SK-N-SH (cell line): ENCODE measurements at regions of chr20 and their contacts with region 1.

Region 1: DNA sequence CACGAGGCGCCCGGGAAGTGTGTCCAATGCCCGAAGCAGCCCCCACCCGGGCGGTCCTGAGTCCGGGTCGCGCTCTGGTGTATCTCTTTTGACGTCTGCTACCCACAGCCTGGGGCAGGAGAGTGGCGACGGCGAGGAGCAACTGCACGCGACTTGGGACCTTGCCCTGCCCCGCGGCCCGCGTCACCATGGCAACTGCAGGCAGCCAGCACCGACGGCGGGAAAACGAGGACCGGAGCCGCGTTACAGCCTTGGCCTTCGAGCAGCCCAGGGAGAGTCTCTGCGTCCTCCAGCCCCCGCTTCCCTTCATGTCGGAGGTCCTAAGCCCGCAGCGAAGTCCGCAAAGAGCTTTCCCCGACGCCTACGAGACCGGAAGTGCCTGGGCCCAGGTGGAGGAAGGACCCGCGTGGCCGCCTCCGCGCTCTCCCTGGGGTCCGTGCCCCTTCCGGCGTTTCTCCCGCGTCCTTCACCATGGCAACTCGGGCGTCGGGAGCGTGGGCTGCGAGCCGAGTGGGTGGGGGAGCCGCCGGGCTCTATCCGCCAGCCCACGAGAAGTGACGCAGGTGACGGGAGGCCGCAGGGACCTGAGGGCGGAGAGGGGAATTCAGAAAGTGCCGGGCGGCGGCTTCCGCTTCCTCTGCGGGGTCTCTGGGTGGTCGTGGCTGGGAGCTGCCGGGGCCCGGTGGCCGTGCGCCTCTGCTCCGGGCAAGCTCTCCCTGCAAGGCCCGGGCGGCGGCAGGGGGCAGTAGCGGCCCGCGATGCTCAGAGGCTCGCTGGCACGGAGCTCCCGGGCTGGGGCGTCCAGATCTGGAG is 88.6 kb upstream of the TGM3 start:
- DNase-seq: peak; percentile 93
- H3K4me3 ChIP-seq: peak overlapping the region; percentile 48 to 66
- H3K27ac ChIP-seq: no peak overlapping the region
- H3K4me1 ChIP-seq: peaks cover 0 to 5% of the 10 kb centered on the region in 2 experiments; a peak in 1 of 4 replicates
- H3K27me3 ChIP-seq: peaks cover 6% of the 10 kb centered on the region; the same call in 1 of the 2 replicates
- CTCF ChIP-seq: peak; percentile 65
- EP300 ChIP-seq: no peak
- RAD21 ChIP-seq: peak; percentile 70

Region 2: GRCh38 chr20:2195614-2196013 is 11.5 kb before region 1 on chr20:
- CTCF ChIA-PET with region 1: interaction called, 14 read pairs
- POLR2A ChIA-PET with region 1: no interaction called
- DNase-seq: no peak
- H3K4me3 ChIP-seq: no peak overlapping the region
- H3K27ac ChIP-seq: no peak overlapping the region
- H3K4me1 ChIP-seq: no peaks in the 10 kb centered on the region; a peak in 1 of 4 replicates
- H3K27me3 ChIP-seq: no peaks in the 10 kb centered on the region; the same call in 1 of the 2 replicates
- CTCF ChIP-seq: no peak
- EP300 ChIP-seq: no peak
- RAD21 ChIP-seq: no peak

Region 3: GRCh38 chr20:2217857-2218539 is 10.8 kb after region 1 on chr20:
- CTCF ChIA-PET with region 1: interaction called, 16 read pairs
- POLR2A ChIA-PET with region 1: no interaction called
- DNase-seq: no peak
- H3K4me3 ChIP-seq: no peak overlapping the region
- H3K27ac ChIP-seq: no peak overlapping the region
- H3K4me1 ChIP-seq: no peaks in the 10 kb centered on the region
- H3K27me3 ChIP-seq: no peaks in the 10 kb centered on the region
- CTCF ChIP-seq: no peak
- EP300 ChIP-seq: no peak
- RAD21 ChIP-seq: no peak

Region 4: DNA sequence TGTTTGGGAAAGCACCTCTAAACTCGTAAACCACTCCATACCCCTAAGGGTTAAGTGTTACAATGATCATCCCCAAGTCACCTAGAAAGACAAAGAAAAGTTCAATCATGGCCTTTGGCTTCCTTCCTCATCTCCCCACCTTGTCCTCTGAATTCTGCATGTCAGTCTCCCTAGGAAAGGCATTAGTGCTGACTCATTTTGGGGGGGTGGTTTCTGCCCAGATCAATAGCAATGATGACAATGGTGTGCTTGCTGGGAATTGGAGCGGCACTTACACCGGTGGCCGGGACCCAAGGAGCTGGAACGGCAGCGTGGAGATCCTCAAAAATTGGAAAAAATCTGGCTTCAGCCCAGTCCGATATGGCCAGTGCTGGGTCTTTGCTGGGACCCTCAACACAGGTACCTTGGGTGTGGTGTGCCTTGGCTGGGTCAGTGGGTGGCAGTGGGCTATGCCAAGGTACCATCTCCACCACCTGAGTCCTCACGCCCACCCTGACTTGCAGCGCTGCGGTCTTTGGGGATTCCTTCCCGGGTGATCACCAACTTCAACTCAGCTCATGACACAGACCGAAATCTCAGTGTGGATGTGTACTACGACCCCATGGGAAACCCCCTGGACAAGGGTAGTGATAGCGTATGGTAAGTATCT is 109.8 kb after region 1 on chr20:
- CTCF ChIA-PET with region 1: no interaction called
- POLR2A ChIA-PET with region 1: no interaction called
- DNase-seq: no peak
- H3K4me3 ChIP-seq: no peak overlapping the region
- H3K27ac ChIP-seq: no peak overlapping the region
- H3K4me1 ChIP-seq: peaks cover 0 to 6% of the 10 kb centered on the region in 2 experiments; a peak in 1 of 4 replicates
- H3K27me3 ChIP-seq: no peaks in the 10 kb centered on the region; the same call in 1 of the 2 replicates
- CTCF ChIP-seq: no peak
- EP300 ChIP-seq: no peak
- RAD21 ChIP-seq: no peak

Region 5: DNA sequence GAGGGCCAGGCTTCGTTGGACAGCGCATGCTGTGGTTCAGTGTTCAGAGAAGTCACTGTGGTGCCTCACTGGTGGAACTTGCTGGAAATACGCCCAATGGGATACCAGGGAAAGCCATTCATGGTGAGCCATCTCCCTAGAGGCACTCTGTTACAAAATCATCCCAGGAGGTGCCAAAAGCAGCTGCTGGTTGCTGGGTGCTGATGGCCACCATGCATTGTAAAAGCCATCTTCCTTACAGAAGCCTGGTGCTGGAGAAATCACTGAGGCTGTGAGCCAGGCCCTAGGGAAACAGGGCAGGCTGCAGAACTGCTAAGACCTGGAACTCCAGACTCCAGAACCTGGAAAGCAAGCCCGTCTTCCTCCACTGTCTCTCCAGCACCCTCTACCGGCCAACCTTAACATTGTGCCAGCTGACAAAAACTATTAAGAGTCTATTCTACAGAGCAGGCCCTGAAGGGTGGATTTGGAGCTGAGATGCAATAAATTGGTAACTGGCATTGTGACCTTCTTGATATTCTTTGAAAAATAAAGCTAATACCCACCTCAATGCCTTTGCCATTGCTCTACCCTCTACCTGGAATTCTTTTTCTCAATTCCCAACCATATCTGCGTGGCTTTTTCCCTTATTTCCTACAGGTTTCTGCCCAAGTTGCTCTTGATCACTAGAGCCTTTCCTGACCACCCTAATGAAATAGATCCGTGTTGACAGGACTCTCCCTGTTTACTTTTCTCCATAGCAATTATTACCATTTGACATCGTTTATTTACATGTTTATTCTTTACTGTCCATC is 245.0 kb after region 1 on chr20:
- CTCF ChIA-PET with region 1: interaction called, 63 read pairs
- POLR2A ChIA-PET with region 1: no interaction called
- DNase-seq: peak; percentile 64
- H3K4me3 ChIP-seq: no peak overlapping the region
- H3K27ac ChIP-seq: no peak overlapping the region
- H3K4me1 ChIP-seq: no peaks in the 10 kb centered on the region; a peak in 1 of 4 replicates
- H3K27me3 ChIP-seq: no peaks in the 10 kb centered on the region
- CTCF ChIP-seq: peak; percentile 82
- EP300 ChIP-seq: no peak
- RAD21 ChIP-seq: peak; percentile 79

Region 6: GRCh38 chr20:2470423-2471193 is 263.4 kb after region 1 on chr20 and contains the start of gene SNRPB:
- CTCF ChIA-PET with region 1: interaction called, 10 read pairs
- POLR2A ChIA-PET with region 1: no interaction called
- DNase-seq: peak; percentile 92
- H3K4me3 ChIP-seq: peak within 1 kb of the TSS; percentile 86 to 89
- H3K27ac ChIP-seq: peak within 1 kb of the TSS; percentile 86 to 96
- H3K4me1 ChIP-seq: peaks cover 15 to 21% of the 10 kb centered on the region in 2 experiments
- H3K27me3 ChIP-seq: no peaks in the 10 kb centered on the region
- CTCF ChIP-seq: no peak
- EP300 ChIP-seq: peak in 1 of 2 experiments; percentile 51; a peak in 1 of 4 replicates
- RAD21 ChIP-seq: peak; percentile 4; the same call in 1 of the 2 replicates
- polyA plus RNA-seq, gene SNRPB: 380 and 455 TPM in 2 replicates